Heart right ventricle (tissue), 16 donors: ENCODE measurements at regions of chr2 and their contacts with region 1.

Region 1: GRCh38 chr2:202317080-202317857 is 51.7 kb downstream of the NOP58 start:
- DNase-seq: peak; percentile 31 to 87
- ATAC-seq: peak; percentile 83 to 94 (median 90)
- H3K4me3 ChIP-seq: no peak overlapping the region
- H3K27ac ChIP-seq: peak overlapping the region in 8 of 10 donors; percentile 25 to 89 (median 40)
- H3K4me1 ChIP-seq: peaks cover 0 to 36% (median 19%) of the 10 kb centered on the region in 9 donors
- H3K27me3 ChIP-seq: no peaks in the 10 kb centered on the region
- CTCF ChIP-seq: no peak

Region 2: GRCh38 chr2:202196727-202197126 is 120.5 kb before region 1 on chr2:
- intact Hi-C with region 1: no loop called
- DNase-seq: no peak
- ATAC-seq: no peak
- H3K4me3 ChIP-seq: no peak overlapping the region
- H3K27ac ChIP-seq: no peak overlapping the region
- H3K4me1 ChIP-seq: no peaks in the 10 kb centered on the region
- H3K27me3 ChIP-seq: no peaks in the 10 kb centered on the region
- CTCF ChIP-seq: no peak

Region 3: GRCh38 chr2:202541137-202541536 is 223.9 kb after region 1 on chr2:
- intact Hi-C with region 1: loop called in 1 of 10 experiments (anchors 10 kb)
- DNase-seq: peak in 1 of 2 donors; percentile 27
- ATAC-seq: peak in 7 of 8 donors; percentile 58 to 93 (median 89)
- H3K4me3 ChIP-seq: no peak overlapping the region
- H3K27ac ChIP-seq: peak overlapping the region in 2 of 10 donors; percentile 9 to 25
- H3K4me1 ChIP-seq: peaks cover 0 to 47% (median 18%) of the 10 kb centered on the region in 9 donors
- H3K27me3 ChIP-seq: no peaks in the 10 kb centered on the region
- CTCF ChIP-seq: no peak